ENCODE measurements at regions of chr2 and their contacts with region 1.

Region 1: DNA sequence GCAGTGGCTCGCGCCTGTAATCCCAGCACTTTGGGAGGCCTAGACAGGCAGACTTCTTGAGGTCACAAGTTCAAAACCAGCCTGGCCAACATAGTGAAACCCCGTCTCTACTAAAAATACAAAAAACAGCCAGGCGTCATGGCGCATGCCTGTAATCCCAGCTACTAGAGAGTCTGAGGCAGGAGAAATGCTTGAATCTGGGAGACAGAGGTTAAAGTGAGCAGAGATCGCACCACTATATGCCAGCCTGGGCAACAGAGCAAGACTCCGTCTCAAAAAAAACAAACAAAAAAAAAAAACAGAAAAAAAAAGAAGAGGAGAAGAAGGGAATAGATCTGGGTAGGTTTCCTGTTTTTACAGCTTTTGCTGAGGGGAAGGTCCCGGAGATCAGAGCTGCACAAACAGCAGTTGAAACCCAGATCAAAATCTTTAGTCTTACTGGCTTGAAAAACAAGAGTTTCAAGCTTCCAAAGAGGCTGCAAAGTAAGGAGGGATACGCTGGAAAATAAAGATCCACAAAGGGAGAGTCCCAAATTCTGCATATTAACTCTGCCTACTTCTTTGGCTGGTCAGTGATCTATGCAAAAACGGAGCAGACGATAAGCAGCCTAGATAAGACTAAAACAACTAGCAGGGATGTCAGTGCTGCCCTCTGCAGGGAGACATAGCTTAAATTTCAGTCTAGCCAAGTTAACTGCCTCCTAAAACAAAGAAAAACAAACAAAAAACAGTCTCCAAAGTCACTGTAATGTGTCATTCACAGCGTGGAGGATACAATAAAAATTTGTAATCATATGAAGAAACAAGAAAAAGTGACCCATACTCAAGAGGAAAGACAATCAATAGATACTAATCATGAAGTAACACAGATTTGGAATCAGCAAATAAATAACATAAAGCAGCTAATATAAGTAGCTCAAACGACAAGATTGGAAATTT is 74.1 kb downstream of the TLK1 start:
- DNase-seq: peak; percentile 70 to 82 (median 80)
- H3K4me3 ChIP-seq: peak overlapping the region in 5 of 7 experiments; percentile 30 to 75 (median 53)
- H3K27ac ChIP-seq: peak overlapping the region in 1 of 2 experiments; percentile 12
- H3K4me1 ChIP-seq: peaks cover 0 to 12% (median 5%) of the 10 kb centered on the region in 4 experiments
- H3K27me3 ChIP-seq: no peaks in the 10 kb centered on the region

Region 2: DNA sequence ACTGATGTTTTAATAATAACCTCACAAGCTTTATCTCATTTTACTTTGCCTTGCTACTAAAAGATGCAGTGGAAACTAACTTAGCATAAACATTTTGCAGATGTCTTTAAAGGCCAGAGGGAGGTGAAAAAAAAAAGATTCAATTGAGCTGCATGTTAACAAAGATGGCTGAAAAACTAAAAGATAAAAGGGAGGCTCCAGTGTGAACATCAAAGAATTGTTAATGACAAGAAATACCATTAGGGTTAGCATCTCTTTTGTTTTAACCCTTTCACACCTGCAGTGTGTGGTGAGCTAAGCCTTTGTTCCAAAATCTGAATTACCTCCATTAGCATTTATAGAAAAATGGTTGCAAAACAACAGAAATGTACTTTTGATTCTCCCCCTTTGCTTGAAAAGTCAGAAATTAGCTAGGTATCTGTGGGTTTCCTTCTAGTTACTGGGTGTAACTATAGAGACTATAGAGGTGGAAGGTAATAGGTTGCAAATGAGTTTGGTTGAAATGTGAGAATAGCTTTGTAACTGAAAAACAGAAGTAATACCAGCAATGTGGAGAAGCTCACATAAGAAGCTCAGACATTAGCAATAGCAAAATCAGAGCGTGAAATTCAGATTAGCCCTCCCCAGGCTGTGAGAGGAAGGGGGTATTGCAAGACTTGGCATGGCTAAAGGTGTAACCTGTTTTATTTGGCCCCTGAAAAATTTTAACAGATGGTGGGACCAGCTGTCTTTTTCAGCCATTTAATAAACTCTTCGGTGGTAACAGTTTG is 406.3 kb before region 1 on chr2:
- CTCF ChIA-PET with region 1: no interaction called
- POLR2A ChIA-PET with region 1: no interaction called
- DNase-seq: no peak
- H3K4me3 ChIP-seq: no peak overlapping the region
- H3K27ac ChIP-seq: no peak overlapping the region
- H3K4me1 ChIP-seq: no peaks in the 10 kb centered on the region
- H3K27me3 ChIP-seq: no peaks in the 10 kb centered on the region

Region 3: DNA sequence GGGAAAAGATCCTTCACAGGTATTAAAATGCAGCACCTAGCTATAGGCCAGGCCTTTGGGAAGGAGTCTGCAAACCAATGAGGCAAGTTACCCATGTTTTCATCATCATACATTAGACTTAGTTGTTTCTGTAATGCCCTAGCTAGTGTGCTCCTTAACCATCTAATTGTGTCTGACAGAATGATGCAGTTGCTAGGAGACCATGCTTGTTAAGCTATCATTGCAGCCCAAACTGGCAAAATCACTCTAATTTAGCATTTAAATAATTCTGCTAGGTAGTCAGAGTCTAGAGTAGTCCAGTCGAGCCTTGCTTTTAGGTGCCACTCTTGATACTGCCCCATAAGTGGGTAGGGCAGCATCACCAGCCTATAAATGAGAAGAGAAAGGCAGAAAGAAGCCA is 235.0 kb before region 1 on chr2:
- CTCF ChIA-PET with region 1: no interaction called
- POLR2A ChIA-PET with region 1: no interaction called
- DNase-seq: no peak
- H3K4me3 ChIP-seq: no peak overlapping the region
- H3K27ac ChIP-seq: no peak overlapping the region
- H3K4me1 ChIP-seq: no peaks in the 10 kb centered on the region
- H3K27me3 ChIP-seq: no peaks in the 10 kb centered on the region

Region 4: GRCh38 chr2:171056307-171056706 is 30.3 kb before region 1 on chr2:
- CTCF ChIA-PET with region 1: interaction called, 11 read pairs
- POLR2A ChIA-PET with region 1: no interaction called
- DNase-seq: no peak
- H3K4me3 ChIP-seq: no peak overlapping the region
- H3K27ac ChIP-seq: no peak overlapping the region
- H3K4me1 ChIP-seq: no peaks in the 10 kb centered on the region
- H3K27me3 ChIP-seq: no peaks in the 10 kb centered on the region

Region 5: DNA sequence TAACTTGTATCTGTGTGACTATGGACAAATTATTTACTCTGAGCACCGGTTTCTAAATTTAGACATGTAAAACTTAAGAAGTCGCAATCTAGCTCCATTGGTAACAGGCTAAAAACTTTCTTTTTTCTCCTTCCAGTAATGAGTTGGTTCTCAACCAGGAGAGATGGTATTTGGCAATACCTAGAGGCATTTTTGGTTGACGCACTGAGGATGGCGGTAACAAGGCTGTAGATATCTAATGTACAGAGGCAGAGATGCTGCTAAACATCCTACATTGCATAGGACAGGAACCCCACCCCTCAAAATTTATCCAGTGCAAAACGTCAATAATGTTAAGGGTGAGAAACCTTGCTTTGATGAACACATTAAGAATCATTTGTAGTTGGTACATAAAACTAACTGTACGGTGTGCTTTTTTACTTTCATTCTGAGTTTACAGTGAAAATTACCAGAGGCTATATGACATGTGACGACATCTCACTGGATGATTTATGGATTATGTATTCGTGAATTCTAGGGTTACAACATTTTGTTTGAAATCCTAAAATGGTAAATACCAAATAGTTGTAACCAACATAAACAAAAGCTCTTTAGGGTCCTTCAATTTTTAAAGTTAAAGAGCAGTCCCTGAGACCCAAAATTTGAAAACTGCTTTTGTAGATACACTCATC is 17.2 kb before region 1 on chr2:
- CTCF ChIA-PET with region 1: interaction called, 12 read pairs
- POLR2A ChIA-PET with region 1: no interaction called
- DNase-seq: peak in 2 of 3 donors; percentile 11 to 14
- H3K4me3 ChIP-seq: no peak overlapping the region
- H3K27ac ChIP-seq: no peak overlapping the region
- H3K4me1 ChIP-seq: no peaks in the 10 kb centered on the region
- H3K27me3 ChIP-seq: no peaks in the 10 kb centered on the region

Region 6: GRCh38 chr2:171102802-171103201 is 16.2 kb after region 1 on chr2:
- CTCF ChIA-PET with region 1: interaction called, 17 read pairs
- POLR2A ChIA-PET with region 1: no interaction called
- DNase-seq: no peak
- H3K4me3 ChIP-seq: no peak overlapping the region
- H3K27ac ChIP-seq: peak overlapping the region in 1 of 2 experiments; percentile 25
- H3K4me1 ChIP-seq: no peaks in the 10 kb centered on the region
- H3K27me3 ChIP-seq: no peaks in the 10 kb centered on the region